ENCODE measurements at regions of chr17 and their contacts with region 1.

Region 1: GRCh38 chr17:4849011-4849536 is 15.9 kb downstream of the MINK1 start:
- DNase-seq: no peak
- H3K4me3 Mint-ChIP-seq: no peak overlapping the region
- H3K27ac Mint-ChIP-seq: no peak overlapping the region
- H3K4me1 Mint-ChIP-seq: peaks cover 12% of the 10 kb centered on the region
- H3K27me3 Mint-ChIP-seq: no peaks in the 10 kb centered on the region

Region 2: GRCh38 chr17:4837471-4838308 is 11.4 kb before region 1 on chr17:
- CTCF ChIA-PET with region 1: interaction called, 10 read pairs
- POLR2A ChIA-PET with region 1: no interaction called
- DNase-seq: no peak
- H3K4me3 Mint-ChIP-seq: no peak overlapping the region
- H3K27ac Mint-ChIP-seq: no peak overlapping the region
- H3K4me1 Mint-ChIP-seq: peaks cover 66% of the 10 kb centered on the region
- H3K27me3 Mint-ChIP-seq: no peaks in the 10 kb centered on the region

Measured in activated CD4-positive, alpha-beta T cell treated with anti-CD3 and anti-CD28 coated beads, Interleukin-2, amount 10 ng/mL, durations not matched to agents 7 days and 5 days (primary cell).